ENCODE measurements at regions of chr22 and their contacts with region 1.

Region 1: DNA sequence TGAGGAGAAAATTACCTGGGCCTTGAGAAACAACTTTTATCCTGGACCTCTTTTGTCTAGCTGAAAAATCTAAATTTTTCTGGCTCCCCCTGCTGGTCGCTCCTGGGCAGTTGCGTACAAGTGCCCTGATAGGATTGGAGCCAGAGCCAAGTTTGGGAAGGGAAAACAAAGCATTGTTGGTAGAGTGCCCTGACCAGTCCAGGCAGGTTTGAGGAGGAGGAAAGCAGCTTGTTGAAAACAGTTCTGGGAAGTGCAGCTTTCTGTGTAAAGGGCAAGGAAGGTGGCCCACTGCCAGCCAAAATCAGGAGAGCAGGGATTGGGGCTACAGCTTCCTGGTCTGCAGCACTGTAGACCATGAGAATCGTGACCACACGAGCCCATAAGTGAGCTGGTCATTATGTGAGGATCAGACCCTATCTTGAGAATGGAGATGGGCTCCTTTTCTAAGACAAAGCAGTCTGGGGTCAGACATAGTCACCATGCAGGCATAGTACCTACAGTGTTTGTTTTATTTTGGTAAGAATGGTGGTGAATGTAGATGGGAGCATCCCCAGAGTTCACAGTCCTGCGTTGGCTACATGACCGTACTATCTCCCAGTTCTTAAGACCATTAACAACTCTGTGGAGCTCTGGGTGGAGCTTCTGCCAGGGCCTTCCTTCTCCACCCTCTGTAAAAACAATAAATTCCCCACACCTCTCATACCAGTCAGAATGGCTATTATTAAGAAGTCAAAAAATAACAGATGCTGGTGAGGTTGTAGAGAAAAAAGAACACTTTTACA is 21.3 kb upstream of the PIK3IP1 start:
- DNase-seq: peak; percentile 75
- ATAC-seq: peak; percentile 63
- H3K4me3 Mint-ChIP-seq: no peak overlapping the region
- H3K27ac Mint-ChIP-seq: no peak overlapping the region
- H3K4me1 Mint-ChIP-seq: peaks cover 2% of the 10 kb centered on the region
- H3K27me3 Mint-ChIP-seq: no peaks in the 10 kb centered on the region

Region 2: DNA sequence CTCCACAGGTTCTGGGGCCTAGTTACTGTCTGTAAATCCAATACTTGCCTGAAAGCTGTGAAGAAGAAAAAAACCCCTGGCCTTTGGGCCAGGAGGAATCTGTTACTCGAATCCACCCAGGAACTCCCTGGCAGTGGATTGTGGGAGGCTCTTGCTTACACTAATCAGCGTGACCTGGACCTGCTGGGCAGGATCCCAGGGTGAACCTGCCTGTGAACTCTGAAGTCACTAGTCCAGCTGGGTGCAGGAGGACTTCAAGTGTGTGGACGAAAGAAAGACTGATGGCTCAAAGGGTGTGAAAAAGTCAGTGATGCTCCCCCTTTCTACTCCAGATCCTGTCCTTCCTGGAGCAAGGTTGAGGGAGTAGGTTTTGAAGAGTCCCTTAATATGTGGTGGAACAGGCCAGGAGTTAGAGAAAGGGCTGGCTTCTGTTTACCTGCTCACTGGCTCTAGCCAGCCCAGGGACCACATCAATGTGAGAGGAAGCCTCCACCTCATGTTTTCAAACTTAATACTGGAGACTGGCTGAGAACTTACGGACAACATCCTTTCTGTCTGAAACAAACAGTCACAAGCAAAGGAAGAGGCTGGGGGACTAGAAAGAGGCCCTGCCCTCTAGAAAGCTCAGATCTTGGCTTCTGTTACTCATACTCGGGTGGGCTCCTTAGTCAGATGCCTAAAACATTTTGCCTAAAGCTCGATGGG is 34.8 kb before region 1 on chr22:
- CTCF ChIA-PET with region 1: interaction called, 20 read pairs
- POLR2A ChIA-PET with region 1: no interaction called
- DNase-seq: peak; percentile 38
- ATAC-seq: peak; percentile 48
- H3K4me3 Mint-ChIP-seq: no peak overlapping the region
- H3K27ac Mint-ChIP-seq: peak overlapping the region; percentile 80
- H3K4me1 Mint-ChIP-seq: peaks cover 29% of the 10 kb centered on the region
- H3K27me3 Mint-ChIP-seq: no peaks in the 10 kb centered on the region

Region 3: GRCh38 chr22:31295831-31296657 is 17.5 kb before region 1 on chr22:
- CTCF ChIA-PET with region 1: interaction called, 107 read pairs
- POLR2A ChIA-PET with region 1: interaction called, 15 read pairs
- DNase-seq: no peak
- ATAC-seq: no peak
- H3K4me3 Mint-ChIP-seq: no peak overlapping the region
- H3K27ac Mint-ChIP-seq: no peak overlapping the region
- H3K4me1 Mint-ChIP-seq: peaks cover 44% of the 10 kb centered on the region
- H3K27me3 Mint-ChIP-seq: no peaks in the 10 kb centered on the region

Region 4: GRCh38 chr22:31337161-31337560 is 23.6 kb after region 1 on chr22:
- CTCF ChIA-PET with region 1: interaction called, 10 read pairs
- POLR2A ChIA-PET with region 1: no interaction called
- DNase-seq: no peak
- ATAC-seq: no peak
- H3K4me3 Mint-ChIP-seq: no peak overlapping the region
- H3K27ac Mint-ChIP-seq: peak overlapping the region; percentile 37
- H3K4me1 Mint-ChIP-seq: peaks cover 41% of the 10 kb centered on the region
- H3K27me3 Mint-ChIP-seq: no peaks in the 10 kb centered on the region

Region 5: GRCh38 chr22:31442768-31443489 is 129.4 kb after region 1 on chr22:
- CTCF ChIA-PET with region 1: no interaction called
- POLR2A ChIA-PET with region 1: no interaction called
- DNase-seq: no peak
- ATAC-seq: no peak
- H3K4me3 Mint-ChIP-seq: no peak overlapping the region
- H3K27ac Mint-ChIP-seq: no peak overlapping the region
- H3K4me1 Mint-ChIP-seq: no peaks in the 10 kb centered on the region
- H3K27me3 Mint-ChIP-seq: no peaks in the 10 kb centered on the region

Region 6: DNA sequence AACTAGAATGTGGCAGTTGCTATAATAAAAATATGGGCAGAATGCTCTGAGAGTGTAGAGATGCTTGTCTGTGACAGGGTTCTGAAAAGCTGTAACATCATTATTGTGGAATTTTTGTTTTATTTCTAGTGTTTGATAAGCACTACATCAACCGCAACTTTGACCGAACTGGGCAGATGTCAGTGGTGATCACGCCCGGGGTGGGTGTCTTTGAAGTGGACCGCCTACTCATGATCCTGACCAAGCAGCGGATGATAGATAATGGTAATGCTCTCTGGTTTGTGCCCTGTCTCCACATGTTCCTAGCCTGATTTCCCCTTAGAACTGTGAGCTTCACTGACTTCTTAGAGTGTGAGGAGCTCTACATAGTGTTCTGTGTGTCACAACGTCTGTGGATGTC is 489.0 kb after region 1 on chr22:
- CTCF ChIA-PET with region 1: no interaction called
- POLR2A ChIA-PET with region 1: no interaction called
- DNase-seq: no peak
- ATAC-seq: no peak
- H3K4me3 Mint-ChIP-seq: no peak overlapping the region
- H3K27ac Mint-ChIP-seq: no peak overlapping the region
- H3K4me1 Mint-ChIP-seq: no peaks in the 10 kb centered on the region
- H3K27me3 Mint-ChIP-seq: no peaks in the 10 kb centered on the region

Measured in activated CD8-positive, alpha-beta T cell treated with anti-CD3 and anti-CD28 coated beads, Interleukin-2, amount 10 ng/mL, durations not matched to agents 7 days and 5 days (primary cell).